Vagina (tissue), 2 donors: ENCODE measurements at regions of chr9 and their contacts with region 1.

Region 1: GRCh38 chr9:133715866-133716563 is 22.1 kb downstream of the SARDH start:
- DNase-seq: no peak
- H3K4me3 ChIP-seq: no peak overlapping the region
- H3K27ac ChIP-seq: no peak overlapping the region
- H3K4me1 ChIP-seq: peaks cover 6% of the 10 kb centered on the region
- H3K27me3 ChIP-seq: no peaks in the 10 kb centered on the region
- CTCF ChIP-seq: no peak
- POLR2A ChIP-seq: no peak

Region 2: GRCh38 chr9:133532937-133533668 is 182.9 kb before region 1 on chr9:
- intact Hi-C with region 1: loop called (anchors 10 kb)
- DNase-seq: no peak
- H3K4me3 ChIP-seq: no peak overlapping the region
- H3K27ac ChIP-seq: no peak overlapping the region
- H3K4me1 ChIP-seq: peaks cover 27% of the 10 kb centered on the region
- H3K27me3 ChIP-seq: no peaks in the 10 kb centered on the region
- CTCF ChIP-seq: peak in 1 of 3 experiments; percentile 35
- POLR2A ChIP-seq: no peak

Region 3: DNA sequence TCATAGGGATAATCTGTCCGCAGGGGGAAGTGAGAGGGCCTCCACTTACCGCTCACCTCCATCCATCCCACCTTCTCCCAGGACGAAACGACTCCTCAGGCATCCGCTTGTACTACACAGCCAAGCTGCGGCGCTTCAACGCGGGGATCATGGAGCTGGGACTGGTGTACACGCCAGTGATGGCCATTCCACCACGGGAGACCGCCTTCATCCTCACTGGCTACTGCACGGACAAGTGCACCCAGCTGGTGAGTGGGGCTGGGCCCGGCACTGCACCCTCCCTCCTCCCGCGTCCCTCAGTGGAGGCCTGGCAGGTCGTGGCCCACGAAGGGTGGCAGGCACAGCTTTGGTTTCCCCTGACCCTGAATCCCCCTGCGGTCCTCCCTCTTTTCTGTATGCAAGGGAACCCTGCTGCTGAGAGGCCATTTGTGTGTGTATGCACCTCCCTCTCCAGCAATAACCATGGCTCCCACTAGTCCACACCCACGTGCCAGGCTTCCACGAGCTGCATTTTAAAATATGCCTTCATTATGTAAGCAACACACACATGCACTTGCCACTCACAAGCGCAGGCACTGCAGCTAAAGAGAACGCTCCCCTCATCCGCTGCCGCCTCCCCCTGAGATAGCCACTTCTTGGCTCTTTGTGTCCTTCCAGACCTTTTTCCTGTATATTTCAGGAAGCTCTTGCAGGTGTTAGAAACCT is 68.1 kb before region 1 on chr9:
- intact Hi-C with region 1: loop called (anchors 2 kb)
- DNase-seq: no peak
- H3K4me3 ChIP-seq: no peak overlapping the region
- H3K27ac ChIP-seq: no peak overlapping the region
- H3K4me1 ChIP-seq: no peaks in the 10 kb centered on the region
- H3K27me3 ChIP-seq: no peaks in the 10 kb centered on the region
- CTCF ChIP-seq: no peak
- POLR2A ChIP-seq: no peak

Region 4: DNA sequence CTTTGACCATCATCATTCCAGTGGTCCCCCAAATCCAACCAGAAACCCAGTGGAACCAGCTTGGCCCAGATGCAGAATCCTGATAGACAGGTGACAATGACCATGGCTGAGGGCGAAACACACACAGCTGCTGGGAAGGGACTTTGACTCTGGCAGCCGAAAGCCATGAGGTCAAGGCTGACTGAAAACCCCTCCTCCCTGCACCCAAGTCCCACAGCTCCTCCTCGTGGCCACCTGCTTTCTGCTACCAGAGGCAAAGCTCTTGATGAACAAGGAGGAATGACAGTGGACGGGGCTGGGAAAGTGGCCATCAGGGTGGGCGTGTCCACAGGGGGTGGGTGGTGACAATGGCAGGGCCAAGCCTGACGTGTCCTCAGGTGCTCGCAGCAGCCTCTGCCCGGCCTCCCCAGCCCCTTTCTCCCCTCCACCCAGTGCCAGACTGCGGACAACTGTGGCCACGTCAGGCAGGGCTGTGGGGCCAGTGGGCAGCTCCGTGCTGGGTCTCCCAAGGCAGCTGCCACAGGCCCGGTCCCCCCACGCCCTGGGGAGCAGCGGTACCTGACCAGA is 52.9 kb after region 1 on chr9:
- intact Hi-C with region 1: no loop called
- DNase-seq: peak in 1 of 2 donors; percentile 67
- H3K4me3 ChIP-seq: no peak overlapping the region
- H3K27ac ChIP-seq: no peak overlapping the region
- H3K4me1 ChIP-seq: no peaks in the 10 kb centered on the region
- H3K27me3 ChIP-seq: no peaks in the 10 kb centered on the region
- CTCF ChIP-seq: no peak
- POLR2A ChIP-seq: no peak